Natural killer cell (primary cell): ENCODE measurements at regions of chr16 and their contacts with region 1.

Region 1: DNA sequence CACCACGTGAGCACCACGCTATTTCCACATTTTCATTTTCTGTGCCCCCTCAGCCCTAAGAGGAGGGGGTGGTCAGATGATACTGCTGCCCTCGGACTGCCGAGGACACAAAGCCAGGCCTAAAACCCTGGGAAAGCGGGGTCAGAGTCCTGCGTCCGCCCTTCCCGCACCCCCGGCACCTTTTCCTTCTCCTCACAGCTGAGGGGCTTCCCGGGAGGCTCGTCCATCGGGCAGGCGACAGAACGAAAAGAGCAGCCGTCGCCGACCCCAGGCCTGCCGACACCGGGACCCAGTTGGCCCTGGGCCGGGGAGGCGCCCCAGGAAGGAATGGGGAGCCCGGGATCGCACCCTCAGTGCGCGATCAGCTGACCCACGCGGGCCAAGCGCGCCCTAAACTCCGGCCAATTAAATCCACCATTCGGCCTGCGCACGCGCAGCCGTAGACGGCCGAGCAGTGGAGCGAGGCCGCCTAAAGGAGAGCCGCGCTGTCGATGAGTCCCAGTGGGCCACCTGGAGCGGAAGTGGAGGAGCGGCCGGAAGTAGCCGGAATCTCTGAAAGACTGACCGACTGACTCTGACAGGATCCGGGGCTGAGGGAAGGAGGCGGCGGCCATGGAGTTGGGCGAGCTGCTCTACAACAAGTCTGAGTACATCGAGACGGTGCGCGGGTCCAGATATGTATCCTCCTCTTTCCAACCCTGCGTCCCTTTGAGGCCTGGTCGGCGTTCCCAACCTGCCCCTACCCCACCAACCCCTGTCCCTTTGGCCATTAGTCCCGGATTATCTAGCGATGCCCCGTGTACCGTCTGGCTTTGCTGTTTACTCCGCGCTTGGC is at the starts of genes DCTN5 and PALB2:
- DNase-seq: peak; percentile 79 to 90
- ATAC-seq: peak; percentile 96 to 99 (median 98)
- H3K4me3 ChIP-seq: peak within 1 kb of the TSS; percentile 66
- H3K4me3 Mint-ChIP-seq: peak within 1 kb of the TSS; percentile 98
- H3K27ac ChIP-seq: peak within 1 kb of the TSS; percentile 65
- H3K27ac Mint-ChIP-seq: peak within 1 kb of the TSS; percentile 90 to 96
- H3K4me1 ChIP-seq: peaks cover 26% of the 10 kb centered on the region
- H3K4me1 Mint-ChIP-seq: peaks cover 39 to 40% of the 10 kb centered on the region in 2 donors
- H3K27me3 ChIP-seq: no peaks in the 10 kb centered on the region
- H3K27me3 Mint-ChIP-seq: no peaks in the 10 kb centered on the region
- CTCF ChIP-seq: no peak
- total RNA-seq, gene DCTN5: 60.7 to 72.1 (median 65.8) TPM
- total RNA-seq, gene PALB2: 10.7 to 12.8 (median 10.9) TPM

Region 2: DNA sequence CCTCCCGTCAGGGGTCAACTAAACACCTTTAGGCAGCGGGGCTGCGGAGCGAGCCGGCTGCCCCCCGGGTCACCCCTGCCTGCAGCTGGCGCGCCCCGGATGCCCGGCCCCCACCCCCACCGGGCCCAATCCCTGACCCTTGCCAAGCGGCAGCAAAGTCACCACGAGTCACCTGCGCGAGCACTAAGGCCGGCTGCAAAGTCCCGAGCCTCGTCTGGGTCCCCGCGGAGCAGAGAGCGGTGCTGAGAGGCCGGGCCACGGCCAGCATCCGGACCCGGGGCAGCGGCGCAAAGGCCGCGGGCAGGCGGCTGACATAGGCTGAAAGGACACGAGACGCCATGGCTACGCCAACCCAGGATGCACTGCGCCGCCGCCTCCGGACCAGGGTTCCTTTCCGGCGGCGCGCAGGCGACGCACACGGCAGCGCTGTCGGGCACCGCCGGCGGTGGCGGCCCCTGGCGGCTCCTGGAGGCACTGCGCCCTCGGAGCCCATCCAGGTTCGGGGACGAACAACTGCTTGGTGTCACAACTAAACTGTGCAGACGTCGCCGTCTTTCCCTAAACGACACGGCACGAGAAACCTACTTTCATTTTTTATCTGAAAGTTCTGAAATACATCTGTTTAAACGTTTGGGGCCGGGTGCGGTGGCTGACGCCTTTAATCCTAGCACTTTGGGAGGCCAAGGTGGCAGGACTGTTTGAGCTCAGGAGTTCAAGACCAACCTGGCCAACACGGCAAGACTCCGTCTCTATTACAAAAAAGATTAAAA is 45.0 kb before region 1 on chr16 and contains the start of gene NDUFAB1:
- intact Hi-C with region 1: loop called (anchors 1 kb)
- DNase-seq: peak; percentile 92 to 95
- ATAC-seq: peak; percentile 99 to 100 (median 99)
- H3K4me3 ChIP-seq: peak within 1 kb of the TSS; percentile 87
- H3K4me3 Mint-ChIP-seq: peak within 1 kb of the TSS; percentile 81
- H3K27ac ChIP-seq: peak within 1 kb of the TSS; percentile 69
- H3K27ac Mint-ChIP-seq: peak within 1 kb of the TSS; percentile 18 to 75
- H3K4me1 ChIP-seq: peaks cover 25% of the 10 kb centered on the region
- H3K4me1 Mint-ChIP-seq: peaks cover 12 to 32% of the 10 kb centered on the region in 2 donors
- H3K27me3 ChIP-seq: no peaks in the 10 kb centered on the region
- H3K27me3 Mint-ChIP-seq: no peaks in the 10 kb centered on the region
- CTCF ChIP-seq: peak; percentile 97
- total RNA-seq, gene NDUFAB1: 27.3 to 30.5 (median 28.3) TPM

Region 3: DNA sequence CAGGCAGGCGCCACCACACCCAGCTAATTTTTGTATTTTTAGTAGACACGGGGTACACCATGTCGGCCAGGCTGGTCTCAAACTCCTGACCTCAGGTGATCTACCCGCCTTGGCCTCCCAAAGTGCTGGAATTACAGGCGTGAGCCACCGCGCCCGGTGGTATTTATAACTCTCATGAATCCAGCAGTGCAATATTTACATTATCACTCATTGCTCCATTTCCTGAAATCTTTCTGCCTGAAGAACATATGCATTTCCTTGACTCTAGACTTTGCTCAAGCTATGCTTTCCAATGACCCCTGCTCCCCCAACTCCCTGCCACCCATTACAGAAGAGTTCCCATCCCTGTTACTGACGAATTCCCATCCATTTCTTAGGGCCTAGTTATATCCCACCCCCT is 25.3 kb before region 1 on chr16:
- intact Hi-C with region 1: no loop called
- DNase-seq: no peak
- ATAC-seq: no peak
- H3K4me3 ChIP-seq: no peak overlapping the region
- H3K4me3 Mint-ChIP-seq: no peak overlapping the region
- H3K27ac ChIP-seq: no peak overlapping the region
- H3K27ac Mint-ChIP-seq: no peak overlapping the region
- H3K4me1 ChIP-seq: no peaks in the 10 kb centered on the region
- H3K4me1 Mint-ChIP-seq: no peaks in the 10 kb centered on the region
- H3K27me3 ChIP-seq: no peaks in the 10 kb centered on the region
- H3K27me3 Mint-ChIP-seq: no peaks in the 10 kb centered on the region
- CTCF ChIP-seq: no peak